ENCODE measurements at regions of chr1 and their contacts with region 1.

Region 1: GRCh38 chr1:203861379-203862184 is at the start of gene SNRPE:
- DNase-seq: peak; percentile 99
- H3K4me3 ChIP-seq: peak within 1 kb of the TSS; percentile 67 to 99 (median 94)
- H3K27ac ChIP-seq: peak within 1 kb of the TSS; percentile 71
- H3K4me1 ChIP-seq: peaks cover 23% of the 10 kb centered on the region
- H3K27me3 ChIP-seq: no peaks in the 10 kb centered on the region
- CTCF ChIP-seq: peak; percentile 92 to 95
- POLR2A ChIP-seq: peak; percentile 84
- total RNA-seq, gene SNRPE: 199 and 219 TPM in 2 replicates

Region 2: GRCh38 chr1:203906932-203907331 is 45.4 kb after region 1 on chr1:
- CTCF ChIA-PET with region 1: no interaction called
- POLR2A ChIA-PET with region 1: no interaction called
- dilution Hi-C with region 1: no loop called
- intact Hi-C with region 1: loop called (anchors 1 kb)
- DNase-seq: peak; percentile 62
- H3K4me3 ChIP-seq: no peak overlapping the region
- H3K27ac ChIP-seq: peak overlapping the region; percentile 33
- H3K4me1 ChIP-seq: peaks cover 9% of the 10 kb centered on the region
- H3K27me3 ChIP-seq: no peaks in the 10 kb centered on the region
- CTCF ChIP-seq: no peak
- POLR2A ChIP-seq: no peak

Region 3: GRCh38 chr1:204151552-204152309 is 290.1 kb after region 1 on chr1 and contains the start of gene ETNK2:
- CTCF ChIA-PET with region 1: no interaction called
- POLR2A ChIA-PET with region 1: no interaction called
- dilution Hi-C with region 1: loop called (anchors 25 kb)
- intact Hi-C with region 1: loop called (anchors 1 kb)
- DNase-seq: peak; percentile 61
- H3K4me3 ChIP-seq: peak within 1 kb of the TSS; percentile 20 to 78 (median 53)
- H3K27ac ChIP-seq: no peak within 1 kb of the TSS
- H3K4me1 ChIP-seq: peaks cover 5% of the 10 kb centered on the region
- H3K27me3 ChIP-seq: no peaks in the 10 kb centered on the region
- CTCF ChIP-seq: no peak
- POLR2A ChIP-seq: no peak
- total RNA-seq, gene ETNK2: 13.5 and 15.5 TPM in 2 replicates

Region 4: DNA sequence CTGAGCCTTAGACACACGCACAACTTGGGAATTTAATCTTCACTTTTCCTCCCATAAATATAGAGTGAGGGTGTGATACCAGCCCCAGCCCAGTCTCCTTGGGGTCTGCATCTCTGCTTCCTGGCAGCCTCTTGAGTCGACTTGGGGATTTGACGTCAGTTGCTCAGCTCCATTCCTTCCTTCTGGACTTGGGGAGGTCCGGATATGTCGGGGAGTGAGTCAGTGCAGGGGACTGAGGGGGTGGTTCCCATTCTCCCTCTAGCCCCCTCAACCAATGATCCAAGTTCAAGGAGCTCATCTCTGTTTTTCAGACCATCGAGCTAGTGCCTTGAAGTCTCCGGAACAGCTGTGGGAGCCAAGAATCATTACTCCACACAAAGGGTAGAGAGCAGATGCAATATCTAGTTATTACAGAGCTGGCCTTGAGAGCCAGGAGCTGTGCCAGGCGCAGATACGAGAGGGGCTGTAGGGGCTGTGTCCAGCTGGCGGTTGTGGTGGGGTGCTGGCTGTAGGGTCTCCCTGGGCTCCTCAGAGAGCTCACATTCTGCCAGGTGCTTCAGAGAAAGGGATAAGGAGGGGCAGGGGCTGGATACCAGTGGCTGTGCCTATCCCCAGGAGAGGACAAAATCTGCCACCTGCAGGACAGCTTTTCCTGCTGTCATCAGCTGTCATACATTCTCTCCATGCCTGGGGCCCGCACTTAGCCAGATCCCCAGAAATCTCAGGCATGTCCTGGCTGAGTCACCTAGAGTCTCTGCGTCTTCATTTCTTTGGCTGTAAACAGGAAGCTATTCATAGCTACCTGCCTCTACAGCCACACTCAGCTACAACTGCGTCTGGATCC is 336.8 kb after region 1 on chr1:
- CTCF ChIA-PET with region 1: interaction called, 4 read pairs
- POLR2A ChIA-PET with region 1: no interaction called
- dilution Hi-C with region 1: no loop called
- intact Hi-C with region 1: loop called (anchors 2 kb)
- DNase-seq: peak; percentile 89
- H3K4me3 ChIP-seq: no peak overlapping the region
- H3K27ac ChIP-seq: peak overlapping the region; percentile 87
- H3K4me1 ChIP-seq: peaks cover 32% of the 10 kb centered on the region
- H3K27me3 ChIP-seq: no peaks in the 10 kb centered on the region
- CTCF ChIP-seq: no peak
- POLR2A ChIP-seq: no peak